ENCODE measurements at regions of chr14 and their contacts with region 1.

Region 1: DNA sequence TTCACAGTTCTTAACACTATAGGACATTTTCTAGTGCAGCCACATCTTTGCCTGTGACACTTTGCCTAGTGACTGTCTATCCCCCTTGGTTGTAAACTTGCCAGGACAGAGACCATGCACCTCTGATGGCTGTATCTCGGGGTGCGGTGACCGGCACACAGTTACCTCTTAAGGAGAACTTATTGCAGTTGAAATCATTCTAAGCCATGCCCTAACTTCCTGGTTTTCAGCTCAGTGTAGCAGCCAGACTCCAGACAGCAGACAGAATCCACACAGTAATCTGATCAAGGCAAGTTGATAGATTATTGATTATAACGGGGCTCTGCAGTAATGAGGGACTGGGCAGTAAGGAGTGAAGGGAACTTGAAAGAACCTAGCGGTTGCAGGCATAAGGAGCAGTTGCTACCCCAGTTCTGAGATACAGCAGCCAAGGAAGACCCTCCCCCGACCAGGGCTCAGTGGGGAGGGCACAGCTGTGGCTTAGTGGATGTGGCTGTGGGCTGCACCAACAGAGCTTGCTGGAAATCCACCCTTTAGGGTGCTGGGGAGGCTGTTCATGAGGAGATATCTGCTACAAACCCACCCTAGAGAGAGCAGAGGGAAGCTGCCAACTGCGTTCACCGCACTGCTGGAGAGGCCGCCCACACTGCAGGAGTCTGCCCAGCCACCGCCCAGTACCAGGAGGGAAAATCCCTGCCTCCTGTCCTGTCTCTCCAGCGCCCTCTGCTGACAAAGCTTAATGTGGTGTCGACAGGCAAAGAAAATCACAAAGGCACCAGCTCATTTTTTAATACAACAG is 58.2 kb upstream of the BEGAIN start:
- H3K4me3 ChIP-seq: no peak overlapping the region
- H3K27ac ChIP-seq: no peak overlapping the region
- H3K4me1 ChIP-seq: peaks cover 2% of the 10 kb centered on the region; the same call in 1 of the 2 replicates
- CTCF ChIP-seq: peak; percentile 74

Region 2: GRCh38 chr14:100392356-100392755 is 253.0 kb before region 1 on chr14:
- CTCF ChIA-PET with region 1: interaction called, 144 read pairs
- POLR2A ChIA-PET with region 1: no interaction called
- H3K4me3 ChIP-seq: no peak overlapping the region
- H3K27ac ChIP-seq: no peak overlapping the region
- H3K4me1 ChIP-seq: peaks cover 14% of the 10 kb centered on the region
- CTCF ChIP-seq: no peak

Region 3: DNA sequence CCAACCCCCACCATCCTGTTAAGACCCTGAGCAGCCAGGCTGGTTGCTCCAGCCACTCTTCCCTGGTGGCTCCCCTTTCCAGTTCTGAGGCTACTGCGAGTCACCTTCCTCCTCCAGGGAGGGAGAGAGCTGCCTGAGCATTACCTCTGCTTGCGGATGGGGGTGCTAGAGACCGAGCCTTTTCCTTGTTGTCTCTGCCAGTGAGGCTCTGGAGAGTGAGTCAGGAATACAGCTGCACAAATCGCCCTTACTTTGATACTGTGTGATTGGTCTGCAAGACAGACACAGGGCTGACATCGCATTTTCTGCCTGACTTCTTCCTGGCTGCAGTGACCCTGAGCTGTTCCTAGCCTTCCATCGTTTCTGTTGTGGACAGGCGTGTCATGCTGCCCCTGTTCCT is 227.9 kb before region 1 on chr14:
- CTCF ChIA-PET with region 1: interaction called, 21 read pairs
- POLR2A ChIA-PET with region 1: interaction called, 6 read pairs
- H3K4me3 ChIP-seq: no peak overlapping the region
- H3K27ac ChIP-seq: no peak overlapping the region
- H3K4me1 ChIP-seq: no peaks in the 10 kb centered on the region; the same call in 1 of the 2 replicates
- CTCF ChIP-seq: peak; percentile 61

Region 4: GRCh38 chr14:100440187-100440631 is 205.2 kb before region 1 on chr14:
- CTCF ChIA-PET with region 1: interaction called, 68 read pairs
- POLR2A ChIA-PET with region 1: interaction called, 7 read pairs
- H3K4me3 ChIP-seq: no peak overlapping the region
- H3K27ac ChIP-seq: no peak overlapping the region
- H3K4me1 ChIP-seq: peaks cover 7% of the 10 kb centered on the region; the same call in 1 of the 2 replicates
- CTCF ChIP-seq: peak; percentile 79

Region 5: DNA sequence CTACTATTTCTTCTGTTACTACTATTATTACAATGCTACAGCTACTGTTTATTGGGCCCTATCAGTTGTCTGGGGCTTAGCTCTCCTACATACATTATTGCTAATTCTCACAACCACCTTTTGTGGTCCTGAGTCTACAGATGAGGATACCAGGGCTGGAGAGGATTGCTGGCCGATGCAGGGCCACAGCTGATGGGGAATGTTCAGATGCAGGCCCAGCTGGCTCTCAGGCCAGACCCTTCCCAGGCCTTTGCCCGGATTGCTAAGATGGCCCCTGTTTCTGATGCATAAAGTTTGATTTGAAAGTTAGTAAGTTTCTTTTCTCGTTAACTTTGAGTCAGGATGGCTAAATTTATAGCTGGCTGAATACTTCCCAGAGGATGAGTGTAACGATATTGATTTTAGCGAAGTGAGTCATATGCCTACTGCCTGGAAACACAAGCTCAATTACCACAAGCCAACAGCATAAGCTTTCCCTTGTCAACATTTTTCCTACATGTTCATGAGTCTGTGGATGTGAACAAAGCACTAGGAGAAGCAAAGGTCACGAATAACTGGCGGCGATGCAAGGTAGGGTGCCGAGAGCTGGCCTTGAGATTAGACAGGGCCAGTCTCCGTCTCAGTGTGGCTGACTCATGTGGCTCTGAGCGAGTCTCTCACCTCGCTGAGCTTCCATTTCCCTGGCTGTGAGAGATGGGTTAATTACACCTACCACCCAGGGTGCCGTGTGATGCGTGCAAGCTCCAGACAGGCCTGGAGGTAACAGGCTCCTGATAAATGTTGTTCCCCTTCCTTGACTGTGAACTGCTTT is 169.2 kb before region 1 on chr14:
- CTCF ChIA-PET with region 1: interaction called, 10 read pairs
- POLR2A ChIA-PET with region 1: no interaction called
- H3K4me3 ChIP-seq: no peak overlapping the region
- H3K27ac ChIP-seq: peak overlapping the region; percentile 68
- H3K4me1 ChIP-seq: peaks cover 24% of the 10 kb centered on the region
- CTCF ChIP-seq: no peak

Region 6: GRCh38 chr14:100524933-100525243 is 120.5 kb before region 1 on chr14:
- CTCF ChIA-PET with region 1: interaction called, 15 read pairs
- POLR2A ChIA-PET with region 1: no interaction called
- H3K4me3 ChIP-seq: no peak overlapping the region
- H3K27ac ChIP-seq: no peak overlapping the region
- H3K4me1 ChIP-seq: no peaks in the 10 kb centered on the region
- CTCF ChIP-seq: no peak

Region 7: GRCh38 chr14:100662879-100663760 is 17.7 kb after region 1 on chr14:
- CTCF ChIA-PET with region 1: interaction called, 12 read pairs
- POLR2A ChIA-PET with region 1: no interaction called
- H3K4me3 ChIP-seq: no peak overlapping the region
- H3K27ac ChIP-seq: no peak overlapping the region
- H3K4me1 ChIP-seq: no peaks in the 10 kb centered on the region
- CTCF ChIP-seq: peak; percentile 38; the same call in 1 of the 2 replicates

Measured in HEK293 (cell line).